ENCODE measurements at regions of chr4 and their contacts with region 1.

Region 1: GRCh38 chr4:6640292-6641163 is at the start of gene MRFAP1:
- DNase-seq: peak; percentile 92
- H3K4me3 Mint-ChIP-seq: peak within 1 kb of the TSS; percentile 95
- H3K27ac Mint-ChIP-seq: peak within 1 kb of the TSS; percentile 98
- H3K4me1 Mint-ChIP-seq: peaks cover 24% of the 10 kb centered on the region
- H3K27me3 Mint-ChIP-seq: peaks cover 1% of the 10 kb centered on the region
- total RNA-seq, gene MRFAP1: 115 and 119 TPM in 2 replicates

Region 2: DNA sequence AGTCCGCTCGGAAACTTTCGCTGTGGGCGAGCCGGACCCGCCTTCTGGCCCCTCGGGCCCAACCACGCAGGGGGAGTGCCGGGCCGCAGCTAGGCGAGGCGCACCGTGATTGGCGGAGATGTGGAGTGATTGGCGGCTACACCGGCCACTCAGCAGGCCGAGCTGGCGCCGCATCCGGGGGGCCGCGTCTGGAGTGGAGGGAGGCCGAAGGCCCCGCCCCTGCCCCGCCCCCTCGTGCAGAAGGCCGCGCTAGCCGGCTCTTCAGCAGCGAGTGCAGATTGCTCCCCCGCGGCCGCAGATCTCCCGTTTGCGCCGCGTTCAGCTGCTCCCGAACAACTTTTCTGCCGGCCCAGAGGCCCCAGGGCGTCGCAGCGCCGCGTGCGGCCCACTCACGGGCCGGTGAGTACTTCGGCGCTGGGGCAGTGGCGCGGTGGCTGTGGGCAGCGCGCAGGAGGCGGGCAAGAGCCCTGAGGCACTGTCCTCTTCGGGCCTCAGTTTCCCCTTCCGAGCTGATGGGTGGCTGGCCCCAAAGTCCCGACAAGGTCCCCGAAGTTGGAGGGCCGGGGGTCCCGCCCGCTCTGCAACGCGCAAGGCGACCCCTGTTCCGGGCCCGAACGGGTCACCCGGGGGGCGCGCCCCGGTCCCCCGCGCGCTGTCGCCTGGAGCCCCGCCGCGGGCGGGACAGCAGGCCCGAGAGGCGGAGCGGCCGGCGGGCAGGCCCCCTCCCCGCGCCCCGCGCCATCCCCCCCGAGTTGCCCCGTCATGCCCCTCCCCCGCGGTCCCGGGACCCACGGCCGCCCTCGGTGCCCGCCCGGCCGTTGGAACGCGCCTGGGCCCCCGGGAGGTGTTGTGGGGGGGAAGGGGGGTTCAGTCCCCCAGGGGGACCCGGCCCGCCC is 370.7 kb before region 1 on chr4 and contains the start of gene WFS1:
- intact Hi-C with region 1: loop called (anchors 1 kb)
- DNase-seq: peak; percentile 96
- H3K4me3 Mint-ChIP-seq: peak within 1 kb of the TSS; percentile 81
- H3K27ac Mint-ChIP-seq: no peak within 1 kb of the TSS
- H3K4me1 Mint-ChIP-seq: peaks cover 18% of the 10 kb centered on the region
- H3K27me3 Mint-ChIP-seq: peaks cover 34% of the 10 kb centered on the region
- total RNA-seq, gene WFS1: 5.7 and 9.3 TPM in 2 replicates

Region 3: GRCh38 chr4:6673660-6674499 is 33.4 kb after region 1 on chr4:
- intact Hi-C with region 1: loop called (anchors 1 kb)
- DNase-seq: peak; percentile 93
- H3K4me3 Mint-ChIP-seq: peak overlapping the region; percentile 98
- H3K27ac Mint-ChIP-seq: peak overlapping the region; percentile 97
- H3K4me1 Mint-ChIP-seq: peaks cover 48% of the 10 kb centered on the region
- H3K27me3 Mint-ChIP-seq: no peaks in the 10 kb centered on the region

Region 4: DNA sequence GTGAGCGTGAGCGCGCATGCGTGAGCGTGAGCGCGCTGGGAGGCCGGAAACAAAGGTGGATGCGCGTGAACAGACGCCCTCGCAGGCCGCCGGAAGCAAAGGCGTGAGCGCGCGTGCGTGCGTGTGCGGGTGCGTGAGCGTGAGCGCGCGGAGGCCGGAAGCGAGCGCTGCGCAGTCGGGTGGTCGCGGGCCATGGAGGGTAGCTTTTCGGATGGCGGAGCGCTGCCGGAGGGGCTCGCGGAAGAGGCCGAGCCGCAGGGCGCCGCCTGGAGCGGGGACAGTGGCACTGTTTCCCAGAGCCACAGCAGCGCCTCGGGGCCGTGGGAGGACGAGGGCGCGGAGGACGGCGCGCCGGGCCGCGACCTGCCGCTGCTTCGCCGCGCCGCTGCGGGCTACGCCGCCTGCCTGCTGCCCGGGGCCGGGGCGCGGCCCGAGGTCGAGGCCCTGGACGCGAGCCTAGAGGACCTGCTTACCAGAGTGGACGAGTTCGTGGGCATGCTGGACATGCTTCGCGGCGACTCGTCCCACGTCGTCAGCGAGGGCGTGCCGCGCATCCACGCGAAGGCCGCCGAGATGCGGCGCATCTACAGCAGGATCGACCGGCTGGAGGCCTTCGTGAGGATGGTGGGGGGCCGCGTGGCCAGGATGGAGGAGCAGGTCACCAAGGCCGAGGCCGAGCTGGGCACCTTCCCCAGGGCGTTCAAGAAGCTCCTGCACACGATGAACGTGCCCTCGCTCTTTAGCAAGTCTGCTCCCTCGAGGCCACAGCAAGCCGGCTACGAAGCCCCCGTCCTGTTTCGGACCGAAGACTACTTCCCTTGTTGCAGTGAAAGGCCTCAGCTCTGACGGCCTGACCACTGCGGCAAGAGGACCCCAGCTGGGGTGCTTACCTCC is 75.7 kb after region 1 on chr4 and contains the start of gene BLOC1S4:
- intact Hi-C with region 1: loop called (anchors 1 kb)
- DNase-seq: peak; percentile 87
- H3K4me3 Mint-ChIP-seq: peak within 1 kb of the TSS; percentile 93
- H3K27ac Mint-ChIP-seq: peak within 1 kb of the TSS; percentile 88
- H3K4me1 Mint-ChIP-seq: peaks cover 27% of the 10 kb centered on the region
- H3K27me3 Mint-ChIP-seq: peaks cover 8% of the 10 kb centered on the region
- total RNA-seq, gene BLOC1S4: 21.5 and 23.6 TPM in 2 replicates

Region 5: DNA sequence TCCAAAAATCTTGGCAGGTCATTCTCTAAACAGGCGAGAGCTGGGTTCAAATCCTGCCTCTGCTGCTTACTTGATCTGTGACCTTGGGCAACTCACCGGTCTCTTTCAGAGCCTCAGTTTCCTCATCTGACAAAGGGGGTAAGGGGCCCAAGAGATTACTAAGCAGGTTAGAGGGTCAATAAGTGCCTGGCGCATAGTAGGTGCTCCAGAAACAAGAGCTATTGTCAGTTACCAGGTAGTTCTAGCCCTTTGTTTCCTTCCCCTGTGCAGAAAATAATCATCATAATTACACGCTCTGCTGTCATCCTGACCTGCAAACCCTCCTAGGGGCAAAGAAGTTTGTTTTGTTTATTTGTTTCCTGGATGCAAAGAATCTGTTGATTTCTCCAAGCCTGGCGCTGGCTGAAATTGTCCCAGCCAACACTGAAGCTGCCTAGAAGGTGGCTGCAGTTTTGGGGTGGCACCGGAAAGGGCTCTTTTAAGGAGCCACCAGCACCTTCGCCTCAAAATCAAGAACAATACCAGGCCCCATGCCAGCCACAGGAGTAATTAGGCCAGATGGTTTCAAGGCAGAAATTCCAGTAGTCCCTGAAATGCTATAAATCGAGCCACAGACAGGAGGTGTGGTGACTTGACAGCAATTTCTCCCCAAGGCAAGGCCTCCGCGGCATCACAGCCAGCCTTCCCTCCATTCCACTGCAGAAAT is 131.8 kb after region 1 on chr4:
- intact Hi-C with region 1: no loop called
- DNase-seq: no peak
- H3K4me3 Mint-ChIP-seq: no peak overlapping the region
- H3K27ac Mint-ChIP-seq: no peak overlapping the region
- H3K4me1 Mint-ChIP-seq: peaks cover 24% of the 10 kb centered on the region
- H3K27me3 Mint-ChIP-seq: peaks cover 4% of the 10 kb centered on the region

Region 6: GRCh38 chr4:6909073-6909965 is 268.8 kb after region 1 on chr4 and contains the start of gene TBC1D14:
- intact Hi-C with region 1: loop called (anchors 2 kb)
- DNase-seq: peak; percentile 82
- H3K4me3 Mint-ChIP-seq: peak within 1 kb of the TSS; percentile 95
- H3K27ac Mint-ChIP-seq: peak within 1 kb of the TSS; percentile 94
- H3K4me1 Mint-ChIP-seq: peaks cover 66% of the 10 kb centered on the region
- H3K27me3 Mint-ChIP-seq: no peaks in the 10 kb centered on the region
- total RNA-seq, gene TBC1D14: 58.1 and 59.7 TPM in 2 replicates

Region 7: DNA sequence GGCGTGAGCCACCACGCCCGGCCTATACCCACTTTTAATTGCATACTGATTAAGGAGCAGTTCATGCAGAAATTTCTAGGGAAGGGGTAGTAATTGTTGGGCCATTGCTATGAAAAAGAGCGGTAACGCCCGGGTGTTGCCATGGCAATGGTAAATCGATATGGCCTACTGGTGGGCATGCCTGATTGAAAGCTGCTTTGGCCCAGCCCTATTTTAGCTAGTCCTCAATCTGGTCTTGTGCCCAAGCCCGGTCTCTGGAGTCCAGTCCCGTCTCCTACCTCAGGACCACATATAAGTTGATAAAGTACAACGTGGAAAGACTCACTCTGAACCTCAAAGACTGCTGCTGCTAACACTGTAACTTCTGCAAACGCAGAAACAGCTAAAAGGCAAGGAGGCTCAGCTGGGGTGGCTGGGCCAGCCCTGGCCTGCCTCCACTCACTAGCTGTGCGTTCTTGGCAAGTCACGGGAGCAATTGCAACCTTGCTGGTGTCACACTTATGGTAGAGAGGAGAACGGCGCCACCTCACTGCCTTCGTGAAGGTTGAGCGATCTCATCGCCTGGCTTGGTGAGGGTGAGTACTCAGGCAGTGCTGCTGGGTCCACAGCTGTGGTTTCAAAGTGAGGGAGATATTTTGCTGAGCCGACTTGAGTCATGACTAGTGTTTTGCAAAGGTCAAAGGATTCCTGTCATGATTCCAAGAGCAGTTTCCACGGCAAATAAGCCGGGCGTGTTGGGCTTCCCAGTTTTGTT is 484.3 kb after region 1 on chr4:
- intact Hi-C with region 1: no loop called
- DNase-seq: no peak
- H3K4me3 Mint-ChIP-seq: no peak overlapping the region
- H3K27ac Mint-ChIP-seq: no peak overlapping the region
- H3K4me1 Mint-ChIP-seq: no peaks in the 10 kb centered on the region
- H3K27me3 Mint-ChIP-seq: no peaks in the 10 kb centered on the region

Region 8: GRCh38 chr4:8440492-8441341 is 1800.2 kb after region 1 on chr4 and contains the starts of genes ACOX3 and TRMT44:
- intact Hi-C with region 1: loop called (anchors 10 kb)
- DNase-seq: peak; percentile 96
- H3K4me3 Mint-ChIP-seq: peak within 1 kb of the TSS; percentile 93
- H3K27ac Mint-ChIP-seq: peak within 1 kb of the TSS; percentile 95
- H3K4me1 Mint-ChIP-seq: peaks cover 73% of the 10 kb centered on the region
- H3K27me3 Mint-ChIP-seq: no peaks in the 10 kb centered on the region
- total RNA-seq, gene ACOX3: 18.4 and 20.7 TPM in 2 replicates
- total RNA-seq, gene TRMT44: 36.8 and 39.2 TPM in 2 replicates

Measured in activated T-helper 1 cell treated with anti-CD3 and anti-CD28 coated beads, Interleukin-12 subunit alpha, Interleukin-12 subunit beta, Interleukin-2, Interleukin-4 antibody, amounts not matched to agents 30 ng/mL and 10 ng/mL and 1 ng/mL, durations not matched to agents 14 hours and 24 hours and 36 hours (primary cell).